Thyroid gland (tissue), 4 donors: ENCODE measurements at regions of chr6 and their contacts with region 1.

Region 1: DNA sequence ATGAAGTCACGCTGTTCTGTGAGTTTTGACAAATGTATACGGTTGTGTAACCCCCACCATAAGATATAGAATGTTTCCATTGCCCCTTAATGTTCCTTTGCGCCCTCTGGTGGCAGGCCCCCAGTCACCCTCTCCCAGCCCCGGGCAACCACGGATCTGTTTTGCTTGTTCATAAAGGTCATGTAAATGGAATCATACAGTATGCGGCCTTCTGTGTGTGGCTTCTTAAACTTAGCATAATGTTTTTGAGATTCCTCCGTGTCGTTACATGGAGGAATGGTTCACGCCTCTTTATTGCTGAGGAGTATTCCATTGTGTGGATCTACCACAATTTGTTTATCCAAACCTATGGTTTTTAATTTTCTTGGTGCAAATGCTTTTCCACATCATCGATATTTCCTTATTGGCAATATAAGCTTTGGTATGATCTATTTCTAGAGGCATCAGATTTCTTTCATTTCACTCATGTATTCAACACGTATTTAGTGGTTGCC is 28.4 kb downstream of the LYRM2 start:
- DNase-seq: peak; percentile 46 to 61
- H3K4me3 ChIP-seq: no peak overlapping the region
- H3K27ac ChIP-seq: no peak overlapping the region
- H3K4me1 ChIP-seq: no peaks in the 10 kb centered on the region
- H3K27me3 ChIP-seq: no peaks in the 10 kb centered on the region
- CTCF ChIP-seq: peak; percentile 28 to 75 (median 62)
- POLR2A ChIP-seq: no peak

Region 2: GRCh38 chr6:89432875-89433251 is 177.3 kb before region 1 on chr6 and contains the start of gene ANKRD6:
- intact Hi-C with region 1: loop called (anchors 5 kb)
- DNase-seq: peak; percentile 82 to 83
- H3K4me3 ChIP-seq: peak within 1 kb of the TSS; percentile 33 to 91 (median 33)
- H3K27ac ChIP-seq: peak within 1 kb of the TSS in 2 of 3 donors; percentile 47 to 75
- H3K4me1 ChIP-seq: peaks cover 3 to 5% of the 10 kb centered on the region in 2 donors
- H3K27me3 ChIP-seq: no peaks in the 10 kb centered on the region
- CTCF ChIP-seq: peak; percentile 50 to 99 (median 77)
- POLR2A ChIP-seq: peak in 1 of 2 donors; percentile 64
- total RNA-seq, gene ANKRD6: 18.2 to 50.6 (median 20.6) TPM

Region 3: DNA sequence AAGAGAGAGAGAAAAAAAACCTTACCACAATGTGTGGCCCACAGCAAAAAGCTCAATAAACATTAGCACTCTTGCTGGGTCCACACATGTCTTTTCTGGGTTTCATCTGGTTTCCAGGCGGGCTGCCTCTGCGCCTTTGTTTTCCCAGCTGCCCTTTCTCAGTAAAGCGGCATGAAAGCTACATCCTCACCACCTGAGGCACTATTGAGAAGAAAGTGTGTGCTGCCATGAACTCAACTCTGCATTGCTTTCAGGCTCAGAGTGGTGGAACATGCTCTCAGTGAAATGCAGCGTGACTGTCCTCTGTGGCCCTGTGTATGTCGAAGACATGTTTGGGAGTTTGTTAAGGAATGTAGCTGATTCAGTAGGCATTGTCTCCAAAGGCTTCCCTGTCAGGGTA is 74.0 kb before region 1 on chr6:
- intact Hi-C with region 1: no loop called
- DNase-seq: no peak
- H3K4me3 ChIP-seq: no peak overlapping the region
- H3K27ac ChIP-seq: no peak overlapping the region
- H3K4me1 ChIP-seq: no peaks in the 10 kb centered on the region
- H3K27me3 ChIP-seq: no peaks in the 10 kb centered on the region
- CTCF ChIP-seq: no peak
- POLR2A ChIP-seq: no peak

Region 4: GRCh38 chr6:89667872-89668556 is 57.8 kb after region 1 on chr6:
- intact Hi-C with region 1: no loop called
- DNase-seq: no peak
- H3K4me3 ChIP-seq: no peak overlapping the region
- H3K27ac ChIP-seq: no peak overlapping the region
- H3K4me1 ChIP-seq: no peaks in the 10 kb centered on the region
- H3K27me3 ChIP-seq: no peaks in the 10 kb centered on the region
- CTCF ChIP-seq: no peak
- POLR2A ChIP-seq: no peak